H1 (cell line): ENCODE measurements at regions of chr11 and their contacts with region 1.

Region 1: DNA sequence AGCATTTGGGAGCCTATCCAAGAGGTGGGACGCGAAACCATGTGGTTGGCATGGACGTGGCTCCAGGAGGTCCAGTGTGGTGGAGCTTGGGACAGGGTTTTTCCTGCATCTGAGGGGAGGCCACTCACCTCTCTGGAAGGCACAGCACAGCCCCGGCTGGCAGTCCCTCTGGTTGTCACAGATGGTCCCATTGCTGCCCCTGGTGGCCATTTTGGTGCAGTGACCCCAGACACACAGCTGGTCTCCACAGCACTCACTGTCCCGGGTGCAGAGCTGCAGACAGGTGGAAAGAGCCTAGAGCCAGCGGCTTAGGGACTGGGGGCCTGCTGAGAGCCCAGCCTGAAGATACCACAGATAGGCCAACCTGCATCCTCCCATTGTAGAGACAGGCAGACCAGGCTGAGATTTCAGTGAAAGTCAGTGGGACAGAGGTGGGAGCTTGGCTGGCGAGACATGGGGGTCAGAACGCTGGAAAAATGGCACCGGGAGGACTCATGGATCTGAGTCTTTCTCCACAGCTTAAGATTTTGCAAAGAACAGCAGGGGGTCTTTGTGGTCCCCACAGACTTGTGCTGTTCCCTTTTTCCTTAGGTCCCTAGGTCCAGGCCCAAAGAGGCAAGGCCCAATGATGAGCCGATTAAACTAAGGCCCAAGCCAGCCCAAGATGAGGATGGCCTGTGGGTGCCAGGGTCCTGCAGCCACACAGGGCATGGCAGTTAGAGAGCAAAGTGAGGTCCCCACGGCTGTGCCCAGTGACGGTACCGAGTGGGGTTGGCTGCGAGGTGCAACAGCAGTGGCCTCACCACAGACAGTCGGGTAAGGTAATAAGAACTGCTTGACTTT is 41.4 kb downstream of the DKK3 start:
- DNase-seq: peak; percentile 58 to 89
- H3K4me3 ChIP-seq: no peak overlapping the region
- H3K27ac ChIP-seq: no peak overlapping the region
- H3K4me1 ChIP-seq: no peaks in the 10 kb centered on the region; a peak in 1 of 7 replicates
- H3K27me3 ChIP-seq: no peaks in the 10 kb centered on the region
- CTCF ChIP-seq: peak; percentile 73 to 96 (median 92)
- EP300 ChIP-seq: no peak
- POLR2A ChIP-seq: no peak
- RAD21 ChIP-seq: peak; percentile 61 to 66

Region 2: GRCh38 chr11:11977206-11977938 is 10.3 kb after region 1 on chr11:
- CTCF ChIA-PET with region 1: interaction called, 63 read pairs
- POLR2A ChIA-PET with region 1: interaction called, 3 read pairs
- DNase-seq: peak in 1 of 2 experiments; percentile 47
- H3K4me3 ChIP-seq: no peak overlapping the region
- H3K27ac ChIP-seq: no peak overlapping the region
- H3K4me1 ChIP-seq: peaks cover 0 to 3% (median 2%) of the 10 kb centered on the region in 4 experiments; a peak in 4 of 7 replicates
- H3K27me3 ChIP-seq: no peaks in the 10 kb centered on the region
- CTCF ChIP-seq: no peak
- EP300 ChIP-seq: no peak
- POLR2A ChIP-seq: no peak
- RAD21 ChIP-seq: no peak

Region 3: DNA sequence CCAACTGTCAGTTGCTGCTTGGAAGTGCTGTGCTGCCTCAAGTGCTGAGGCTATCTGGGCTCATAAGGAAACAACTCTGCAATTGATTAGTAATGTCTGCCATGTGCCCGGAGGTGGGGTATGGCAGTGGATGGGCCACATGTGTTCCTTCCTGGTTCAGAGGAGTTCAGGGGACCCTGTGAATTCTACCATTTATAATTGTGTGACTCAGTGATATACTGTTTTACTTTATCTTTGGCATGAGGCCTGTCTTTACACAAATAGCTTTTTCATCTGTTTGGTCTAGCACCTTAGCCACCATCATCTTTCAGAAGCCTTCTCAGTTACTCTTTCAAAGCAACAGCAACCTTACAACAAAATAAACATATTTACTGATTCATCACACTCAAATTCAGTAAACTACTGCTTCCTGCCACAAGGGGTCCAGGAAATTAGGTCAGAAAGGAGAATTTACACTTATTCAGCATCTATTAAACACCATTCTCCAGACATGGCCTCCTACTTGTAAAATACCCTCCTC is 20.5 kb after region 1 on chr11:
- CTCF ChIA-PET with region 1: interaction called, 15 read pairs
- POLR2A ChIA-PET with region 1: no interaction called
- DNase-seq: no peak
- H3K4me3 ChIP-seq: no peak overlapping the region
- H3K27ac ChIP-seq: no peak overlapping the region
- H3K4me1 ChIP-seq: peaks cover 0 to 7% (median 1%) of the 10 kb centered on the region in 4 experiments; a peak in 3 of 7 replicates
- H3K27me3 ChIP-seq: no peaks in the 10 kb centered on the region
- CTCF ChIP-seq: peak in 1 of 3 experiments; percentile 39; a peak in 1 of 4 replicates
- EP300 ChIP-seq: no peak
- POLR2A ChIP-seq: no peak
- RAD21 ChIP-seq: no peak

Region 4: DNA sequence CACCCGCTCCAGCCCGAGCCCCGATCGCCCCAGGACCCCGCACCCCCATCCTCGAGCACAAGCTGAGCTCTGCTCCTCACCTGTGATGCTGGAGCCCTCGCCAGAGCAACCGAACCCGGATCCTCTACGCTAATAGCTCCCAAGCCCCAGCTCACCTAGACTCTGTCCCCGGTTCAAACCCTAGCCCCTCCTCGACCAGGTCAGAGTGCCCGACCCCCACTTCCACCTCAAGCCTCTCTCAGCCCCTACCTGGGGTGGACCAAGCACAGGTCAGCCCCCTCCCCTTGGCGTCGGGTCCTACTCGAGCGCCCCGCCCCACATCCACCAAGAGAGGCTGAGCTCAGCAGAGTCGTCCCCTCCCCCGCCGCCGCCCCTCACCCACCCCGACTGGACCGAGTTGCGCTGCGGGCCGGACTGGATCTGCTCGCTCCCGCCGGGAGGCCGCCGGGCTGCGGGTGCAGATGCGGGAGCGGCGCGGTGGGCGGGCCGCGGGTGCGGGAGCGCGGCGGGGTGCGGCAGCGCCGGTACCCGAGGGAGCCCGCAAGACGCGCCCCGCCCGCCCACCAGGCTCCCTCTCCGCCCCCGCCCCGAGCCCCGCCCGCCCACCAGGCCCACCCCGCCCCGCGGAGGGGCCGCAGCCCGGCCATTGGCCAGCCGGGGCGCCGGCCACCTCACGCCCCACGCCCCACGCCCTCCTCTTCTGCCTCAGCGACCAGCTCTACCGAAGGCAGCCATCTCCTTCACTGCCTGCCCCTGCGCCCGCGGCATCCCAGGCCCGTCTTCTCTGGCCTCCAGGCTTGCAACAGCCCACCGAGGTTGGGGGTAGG is 42.0 kb after region 1 on chr11:
- CTCF ChIA-PET with region 1: interaction called, 30 read pairs
- POLR2A ChIA-PET with region 1: interaction called, 3 read pairs
- DNase-seq: peak in 1 of 2 experiments; percentile 88
- H3K4me3 ChIP-seq: peak overlapping the region; percentile 70 to 80 (median 72)
- H3K27ac ChIP-seq: no peak overlapping the region
- H3K4me1 ChIP-seq: peaks cover 0 to 19% (median 5%) of the 10 kb centered on the region in 4 experiments; a peak in 6 of 7 replicates
- H3K27me3 ChIP-seq: peaks cover 0 to 13% (median 10%) of the 10 kb centered on the region in 4 experiments; a peak in 4 of 7 replicates
- CTCF ChIP-seq: no peak
- EP300 ChIP-seq: no peak
- POLR2A ChIP-seq: no peak
- RAD21 ChIP-seq: 0 out of 4 replicates have a peak, but pooled peaks of 1 of the 2 experiments have one; percentile 4

Region 5: DNA sequence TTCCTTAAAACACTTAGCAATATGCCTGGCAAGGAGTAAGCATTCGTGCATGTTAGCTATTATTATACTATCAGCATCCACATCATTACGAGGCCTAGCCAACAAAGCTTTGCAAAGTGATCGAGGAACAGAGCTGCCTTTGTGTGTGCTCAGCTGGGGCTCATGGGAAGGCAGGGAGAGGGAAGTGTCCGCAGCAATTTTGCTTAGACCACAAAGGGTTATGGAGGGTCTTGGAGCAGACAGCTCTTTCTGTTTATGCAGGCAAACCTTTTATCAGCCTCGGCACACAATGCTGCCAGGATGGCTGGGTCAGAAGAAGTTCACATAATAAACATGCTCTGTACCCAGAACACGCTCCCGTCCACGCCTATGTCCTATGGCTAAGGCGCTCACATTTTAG is 52.3 kb after region 1 on chr11:
- CTCF ChIA-PET with region 1: interaction called, 12 read pairs
- POLR2A ChIA-PET with region 1: no interaction called
- DNase-seq: no peak
- H3K4me3 ChIP-seq: no peak overlapping the region
- H3K27ac ChIP-seq: no peak overlapping the region
- H3K4me1 ChIP-seq: peaks cover 0 to 3% (median 0%) of the 10 kb centered on the region in 4 experiments; a peak in 2 of 7 replicates
- H3K27me3 ChIP-seq: no peaks in the 10 kb centered on the region
- CTCF ChIP-seq: no peak
- EP300 ChIP-seq: no peak
- POLR2A ChIP-seq: no peak
- RAD21 ChIP-seq: no peak